HEK293 (cell line): ENCODE measurements at regions of chr5 and their contacts with region 1.

Region 1: DNA sequence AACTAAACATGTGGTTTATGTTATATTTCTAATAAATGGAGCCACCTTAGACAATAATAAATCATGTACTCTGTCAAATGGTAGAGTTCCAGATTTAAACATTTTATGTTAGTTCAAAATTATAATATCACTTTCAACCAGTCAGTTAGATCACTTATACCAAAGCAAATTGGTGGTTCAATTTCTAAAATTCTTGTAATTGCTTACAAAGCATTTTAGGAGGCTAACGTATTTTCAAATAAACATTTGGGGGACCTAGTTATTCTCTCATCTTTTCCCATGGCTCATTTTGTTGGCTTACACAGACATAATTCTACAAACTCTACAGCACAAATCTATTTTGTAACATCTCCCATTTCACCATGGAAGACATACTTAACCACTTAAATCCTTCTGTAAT is 39.9 kb downstream of the EDIL3 start:
- H3K4me3 ChIP-seq: no peak overlapping the region
- H3K27ac ChIP-seq: no peak overlapping the region
- H3K4me1 ChIP-seq: peaks cover 7% of the 10 kb centered on the region; the same call in 1 of the 2 replicates
- CTCF ChIP-seq: no peak

Region 2: GRCh38 chr5:84274585-84275468 is 70.0 kb before region 1 on chr5:
- CTCF ChIA-PET with region 1: no interaction called
- POLR2A ChIA-PET with region 1: no interaction called
- H3K4me3 ChIP-seq: no peak overlapping the region
- H3K27ac ChIP-seq: no peak overlapping the region
- H3K4me1 ChIP-seq: peaks cover 3% of the 10 kb centered on the region; the same call in 1 of the 2 replicates
- CTCF ChIP-seq: no peak

Region 3: DNA sequence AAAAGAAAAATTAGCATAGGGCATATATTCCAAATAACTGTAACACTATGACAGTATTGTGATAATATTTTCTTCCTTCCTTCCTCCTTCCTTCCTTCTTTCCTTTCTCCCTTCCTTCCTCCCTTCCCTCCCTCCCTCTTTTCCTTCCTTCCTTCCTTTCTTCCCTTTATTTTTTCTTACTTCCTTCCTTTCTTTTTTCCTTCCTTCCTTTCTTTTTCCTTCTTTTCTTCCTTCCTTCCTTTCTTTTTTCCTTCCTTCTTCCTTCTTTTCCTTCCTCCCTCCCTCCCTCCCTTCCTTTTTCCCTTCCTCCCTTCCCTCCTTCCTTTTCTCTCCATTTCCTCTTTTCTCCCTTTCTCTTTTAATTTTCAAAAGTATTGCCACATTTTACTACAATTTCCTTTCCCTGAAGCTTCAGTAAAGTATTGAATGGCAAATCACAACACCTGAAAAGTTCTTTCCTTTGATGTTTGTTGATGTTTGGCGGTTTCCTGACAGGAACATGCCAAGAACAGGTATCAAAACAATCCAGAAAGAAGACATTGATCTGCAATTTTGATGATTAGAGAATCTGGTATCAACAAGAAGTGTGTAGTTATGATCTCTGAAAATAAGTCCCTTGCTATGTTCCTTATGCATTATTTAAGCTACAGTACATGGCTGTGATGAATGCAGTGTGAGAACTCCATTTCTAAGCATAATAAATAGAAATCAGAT is 293.0 kb after region 1 on chr5:
- CTCF ChIA-PET with region 1: no interaction called
- POLR2A ChIA-PET with region 1: interaction called, 10 read pairs
- H3K4me3 ChIP-seq: no peak overlapping the region
- H3K27ac ChIP-seq: no peak overlapping the region
- H3K4me1 ChIP-seq: no peaks in the 10 kb centered on the region
- CTCF ChIP-seq: no peak